ENCODE measurements at regions of chr1 and their contacts with region 1.

Region 1: GRCh38 chr1:68459796-68460195 is 10.0 kb upstream of the RPE65 start:
- DNase-seq: no peak
- ATAC-seq: no peak
- H3K4me3 ChIP-seq: no peak overlapping the region
- H3K27ac ChIP-seq: no peak overlapping the region
- H3K4me1 ChIP-seq: no peaks in the 10 kb centered on the region
- H3K27me3 ChIP-seq: no peaks in the 10 kb centered on the region

Region 2: GRCh38 chr1:68542586-68542985 is 82.8 kb after region 1 on chr1:
- intact Hi-C with region 1: no loop called
- DNase-seq: no peak
- ATAC-seq: no peak
- H3K4me3 ChIP-seq: no peak overlapping the region
- H3K27ac ChIP-seq: no peak overlapping the region
- H3K4me1 ChIP-seq: no peaks in the 10 kb centered on the region
- H3K27me3 ChIP-seq: peaks cover 0 to 2% of the 10 kb centered on the region in 2 donors

Region 3: DNA sequence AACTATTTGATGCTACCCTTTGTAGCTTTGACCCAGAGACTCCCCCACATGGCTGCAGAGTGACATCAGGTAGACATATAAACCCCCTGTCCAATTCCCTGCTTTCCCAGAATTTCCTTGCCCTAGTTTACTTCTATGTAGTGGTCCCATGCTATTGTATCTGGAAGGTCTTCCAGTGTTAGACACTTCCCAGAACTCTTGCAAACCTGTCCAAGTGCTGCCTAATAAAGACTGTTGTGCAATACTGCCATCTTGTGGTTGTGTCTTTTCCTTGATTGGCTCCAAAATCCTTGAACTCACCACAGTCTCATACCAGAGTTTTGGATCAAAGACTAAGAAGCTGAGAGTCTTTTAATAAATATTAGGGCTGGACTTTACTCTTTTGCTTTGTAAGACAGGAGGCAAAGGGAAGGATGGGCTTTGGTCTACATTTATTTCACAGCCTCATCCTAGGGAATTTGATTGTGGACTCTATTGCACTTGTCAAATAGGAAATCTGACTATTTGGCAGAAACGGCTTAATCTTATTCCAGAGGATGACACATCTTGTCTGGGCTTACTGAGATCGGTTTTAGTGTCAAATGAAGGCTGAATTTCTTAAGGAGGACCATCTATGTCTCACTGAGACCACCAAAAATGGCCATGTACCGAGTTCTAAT is 1277.9 kb after region 1 on chr1:
- intact Hi-C with region 1: loop called in 1 of 2 experiments (anchors 10 kb)
- DNase-seq: no peak
- ATAC-seq: peak; percentile 84
- H3K4me3 ChIP-seq: no peak overlapping the region
- H3K27ac ChIP-seq: no peak overlapping the region
- H3K4me1 ChIP-seq: no peaks in the 10 kb centered on the region
- H3K27me3 ChIP-seq: no peaks in the 10 kb centered on the region

Measured in aorta (tissue), 5 donors.